ENCODE measurements at regions of chr11 and their contacts with region 1.

Region 1: DNA sequence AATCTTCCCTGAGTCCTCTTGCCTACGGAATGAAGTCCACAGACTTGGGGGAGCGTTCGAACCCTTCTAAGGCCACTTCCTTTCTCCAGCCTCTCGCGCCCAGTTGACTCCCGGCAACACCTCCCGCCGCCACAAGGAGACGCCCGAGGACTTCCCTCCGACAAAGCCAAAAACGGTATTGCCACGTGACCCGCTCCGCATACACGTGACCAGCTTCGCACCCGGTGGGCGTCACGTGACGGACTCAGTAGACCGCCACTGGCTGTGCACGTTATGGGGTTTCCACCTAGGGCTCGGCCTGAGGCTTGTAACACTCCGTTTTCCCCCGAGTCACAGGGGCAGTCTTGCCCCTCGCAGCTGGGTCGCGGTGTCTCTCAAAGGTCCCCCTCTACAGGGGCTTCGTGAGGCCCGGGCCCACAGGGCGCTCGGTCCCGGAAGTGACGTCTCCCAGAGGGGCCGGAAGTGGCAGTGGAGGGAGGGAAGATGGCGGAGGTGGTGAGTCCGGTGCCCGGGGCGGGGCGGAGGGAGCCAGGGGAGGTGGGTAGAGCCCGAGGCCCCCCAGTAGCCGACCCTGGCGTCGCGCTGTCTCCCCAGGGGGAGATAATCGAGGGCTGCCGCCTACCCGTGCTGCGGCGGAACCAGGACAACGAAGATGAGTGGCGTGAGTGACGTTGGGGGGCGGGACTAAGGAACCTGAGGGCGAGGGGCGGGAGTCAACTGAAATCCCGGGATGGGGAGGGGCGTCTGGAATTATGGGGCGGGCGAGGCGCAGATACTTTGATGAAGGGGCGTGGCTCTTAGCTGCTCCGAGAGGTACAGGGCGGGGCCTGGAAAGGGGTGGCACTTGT is at the start of gene KAT5:
- DNase-seq: peak; percentile 99 to 100
- H3K4me3 ChIP-seq: peak within 1 kb of the TSS; percentile 74 to 85 (median 80)
- H3K27ac ChIP-seq: peak within 1 kb of the TSS; percentile 99 to 100
- H3K4me1 ChIP-seq: peaks cover 0 to 10% of the 10 kb centered on the region in 2 donors
- H3K27me3 ChIP-seq: no peaks in the 10 kb centered on the region
- CTCF ChIP-seq: peak; percentile 100
- POLR2A ChIP-seq: peak; percentile 96
- total RNA-seq, gene KAT5: 50.1 to 66.7 (median 61.3) TPM

Region 2: DNA sequence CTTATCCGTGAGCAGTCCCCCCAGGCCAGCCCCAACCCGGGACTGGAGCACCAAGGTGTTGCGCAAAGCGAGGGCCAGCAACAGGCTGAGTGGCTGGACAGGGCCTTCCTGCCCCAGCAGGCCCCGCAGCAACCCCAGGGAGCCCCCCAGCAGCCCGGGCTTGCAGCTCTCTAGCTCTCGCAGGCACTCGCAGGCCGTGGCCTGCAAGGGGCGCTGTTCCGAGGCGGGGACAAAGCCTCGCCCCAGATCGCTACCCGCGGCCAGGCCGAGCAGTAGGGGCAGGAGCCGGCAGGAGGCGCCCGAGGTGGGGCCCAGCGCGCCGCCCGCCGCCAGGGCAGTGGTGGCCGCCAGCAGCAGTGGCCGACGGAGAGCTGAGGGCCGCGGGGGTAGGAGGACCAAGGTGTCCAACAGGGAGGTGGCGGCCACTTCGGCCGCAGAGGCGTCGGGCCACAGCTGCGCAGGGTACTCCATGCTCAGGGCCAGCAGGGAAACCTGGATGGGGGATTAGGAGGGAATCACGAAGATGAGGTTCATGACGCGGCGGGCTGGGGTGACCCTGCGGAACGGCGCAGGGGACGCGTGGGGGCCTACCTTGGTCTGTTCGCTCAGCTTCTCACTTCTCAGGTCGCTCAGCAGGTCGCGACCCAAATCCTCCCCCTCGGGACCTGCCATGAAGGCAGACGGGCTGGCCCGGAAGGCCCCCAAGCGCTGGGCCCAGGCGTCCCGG is 68.0 kb after region 1 on chr11:
- intact Hi-C with region 1: loop called (anchors 5 kb)
- DNase-seq: peak; percentile 54 to 83
- H3K4me3 ChIP-seq: peak overlapping the region; percentile 87 to 95 (median 88)
- H3K27ac ChIP-seq: peak overlapping the region; percentile 79 to 87
- H3K4me1 ChIP-seq: peaks cover 0 to 4% of the 10 kb centered on the region in 2 donors
- H3K27me3 ChIP-seq: no peaks in the 10 kb centered on the region
- CTCF ChIP-seq: peak; percentile 87 to 98 (median 89)
- POLR2A ChIP-seq: no peak

Region 3: DNA sequence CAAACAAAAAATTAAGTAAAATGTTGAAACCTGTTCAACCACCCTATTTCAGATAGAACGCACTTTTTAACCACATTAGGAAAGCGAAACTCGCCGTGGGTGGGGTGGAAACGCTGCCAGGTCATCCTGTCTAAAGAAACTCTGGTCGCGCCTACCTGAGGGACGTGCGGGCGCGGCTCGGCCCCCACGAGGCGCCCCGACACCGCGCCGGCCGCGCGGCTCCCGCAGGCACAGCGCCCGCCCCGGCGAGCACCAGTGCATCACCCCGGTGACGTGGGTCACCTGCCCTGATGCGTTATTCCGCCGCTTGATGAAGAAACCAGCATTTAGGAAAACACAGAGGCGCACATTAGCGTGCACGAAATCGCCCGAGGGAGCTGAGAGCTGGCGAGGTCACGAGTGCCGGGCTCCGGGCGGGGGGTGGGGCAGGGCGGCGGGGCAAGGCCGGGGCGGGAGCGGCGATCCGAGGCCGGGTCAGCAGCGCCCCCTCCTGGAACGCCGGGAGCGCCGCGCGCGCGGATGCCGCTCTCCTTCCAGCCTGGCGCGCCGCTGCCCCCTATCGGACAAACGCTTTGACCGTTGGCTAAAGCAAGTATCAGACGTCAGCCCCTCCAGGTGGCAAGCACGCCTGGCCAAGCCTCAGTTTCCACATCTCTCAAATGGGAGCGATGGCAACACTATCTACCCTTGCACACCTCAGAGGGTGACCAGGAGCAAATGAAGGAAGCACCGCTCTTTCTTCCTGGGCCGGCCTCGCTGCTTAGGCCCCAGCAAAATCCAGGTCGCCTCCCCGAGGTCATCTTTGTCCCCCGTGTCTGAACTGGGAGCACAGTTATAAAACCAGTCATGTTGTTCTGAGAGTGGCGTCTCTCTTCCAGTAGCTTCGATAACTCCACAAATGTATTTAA is 106.1 kb after region 1 on chr11:
- intact Hi-C with region 1: loop called (anchors 5 kb)
- DNase-seq: peak; percentile 85 to 97
- H3K4me3 ChIP-seq: peak overlapping the region; percentile 51 to 87 (median 72)
- H3K27ac ChIP-seq: peak overlapping the region; percentile 91 to 92
- H3K4me1 ChIP-seq: peaks cover 0 to 14% of the 10 kb centered on the region in 2 donors
- H3K27me3 ChIP-seq: no peaks in the 10 kb centered on the region
- CTCF ChIP-seq: peak; percentile 97 to 98 (median 97)
- POLR2A ChIP-seq: no peak

Measured in breast epithelium (tissue), 4 donors.